ENCODE measurements at regions of chr15 and their contacts with region 1.

Region 1: DNA sequence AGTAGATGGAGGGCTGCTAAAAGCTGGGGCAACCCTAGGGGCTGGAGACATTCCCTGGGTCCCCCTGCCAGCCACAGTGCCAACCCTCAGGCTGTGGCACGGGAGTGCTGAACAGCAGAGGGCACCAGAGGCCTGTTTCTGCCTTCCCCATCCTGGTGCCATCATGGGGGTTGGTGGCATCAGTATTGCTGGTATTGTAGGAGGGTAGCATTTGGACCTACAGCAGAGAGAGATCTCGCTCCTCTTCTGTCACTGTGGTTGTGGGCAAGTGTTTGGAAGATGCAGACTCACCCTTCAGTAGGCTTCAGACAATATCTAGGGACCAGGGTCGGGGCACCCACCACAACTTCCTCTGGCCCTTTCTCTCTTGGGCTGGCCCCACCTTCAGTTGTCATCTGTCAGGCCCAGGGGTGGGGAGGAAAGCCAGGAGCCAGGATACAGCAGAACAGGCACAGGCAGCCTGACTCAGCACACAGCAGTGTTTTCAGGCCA is 123.5 kb downstream of the RPLP1 start:
- DNase-seq: peak; percentile 60
- ATAC-seq: peak; percentile 62 to 83

Region 2: GRCh38 chr15:69475769-69476358 is 100.2 kb before region 1 on chr15:
- intact Hi-C with region 1: loop called in 1 of 2 experiments (anchors 10 kb)
- DNase-seq: peak; percentile 75
- ATAC-seq: peak; percentile 86 to 87

Region 3: GRCh38 chr15:69914960-69915359 is 338.9 kb after region 1 on chr15:
- intact Hi-C with region 1: no loop called
- DNase-seq: no peak
- ATAC-seq: no peak

Region 4: DNA sequence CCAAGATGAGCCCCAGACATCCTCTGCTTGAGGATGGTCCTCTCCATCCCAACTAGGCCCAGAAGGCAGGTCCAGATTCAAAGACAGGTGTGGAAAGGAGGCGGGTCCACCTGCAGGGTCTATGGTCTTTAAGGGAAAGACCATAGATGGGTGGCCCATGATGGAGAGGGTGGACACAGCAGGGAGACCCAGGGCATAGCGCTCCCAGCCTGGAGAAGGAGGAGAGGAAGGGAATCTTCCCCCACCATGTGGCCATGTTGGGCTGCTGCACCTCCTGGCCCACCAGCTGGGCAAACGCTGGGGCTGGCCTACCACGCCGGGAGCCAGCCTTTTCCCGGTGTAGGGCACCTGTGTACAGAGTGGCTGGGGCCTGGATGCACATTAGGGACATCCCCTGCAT is 786.8 kb after region 1 on chr15:
- intact Hi-C with region 1: loop called in 1 of 2 experiments (anchors 10 kb)
- DNase-seq: no peak
- ATAC-seq: peak; percentile 79 to 88

Region 5: DNA sequence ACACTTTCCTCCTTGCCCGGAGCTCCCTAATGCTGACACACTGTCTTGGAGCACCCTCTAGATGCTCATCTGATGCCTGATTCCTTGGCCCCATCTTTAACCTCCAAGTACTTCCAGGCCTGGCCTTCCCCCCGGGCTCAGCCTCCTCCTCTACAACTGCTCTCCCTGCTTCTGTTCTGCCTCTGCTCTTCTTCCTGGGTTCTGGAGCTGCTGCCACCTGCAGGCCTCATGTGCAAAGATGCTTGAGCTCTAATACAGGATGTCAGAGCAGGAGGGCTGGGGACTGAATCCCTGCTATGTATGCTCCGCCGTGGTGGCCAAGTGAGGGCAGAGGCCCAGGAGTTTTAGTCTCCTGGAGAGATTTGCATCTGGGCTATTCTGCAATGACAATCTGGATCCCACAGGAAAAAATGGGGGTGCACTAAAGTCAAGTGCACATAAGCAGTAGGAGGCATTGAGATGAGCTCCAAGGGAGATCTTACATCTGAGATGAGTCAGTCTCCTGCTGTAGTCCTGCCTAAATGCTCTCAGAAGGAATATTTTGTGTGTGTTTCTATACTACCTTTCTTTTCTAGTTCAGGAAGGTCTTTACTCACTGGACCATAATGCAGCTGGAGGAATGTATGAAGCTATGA is 890.9 kb after region 1 on chr15:
- intact Hi-C with region 1: loop called in 1 of 2 experiments (anchors 5 kb)
- DNase-seq: peak; percentile 57
- ATAC-seq: peak; percentile 42 to 63

Region 6: GRCh38 chr15:70488002-70488605 is 912.0 kb after region 1 on chr15:
- intact Hi-C with region 1: loop called in 1 of 2 experiments (anchors 5 kb)
- DNase-seq: peak; percentile 64
- ATAC-seq: peak; percentile 53 to 54

Measured in left cardiac atrium (tissue), 4 donors.